ENCODE measurements at regions of chr18 and their contacts with region 1.

Region 1: DNA sequence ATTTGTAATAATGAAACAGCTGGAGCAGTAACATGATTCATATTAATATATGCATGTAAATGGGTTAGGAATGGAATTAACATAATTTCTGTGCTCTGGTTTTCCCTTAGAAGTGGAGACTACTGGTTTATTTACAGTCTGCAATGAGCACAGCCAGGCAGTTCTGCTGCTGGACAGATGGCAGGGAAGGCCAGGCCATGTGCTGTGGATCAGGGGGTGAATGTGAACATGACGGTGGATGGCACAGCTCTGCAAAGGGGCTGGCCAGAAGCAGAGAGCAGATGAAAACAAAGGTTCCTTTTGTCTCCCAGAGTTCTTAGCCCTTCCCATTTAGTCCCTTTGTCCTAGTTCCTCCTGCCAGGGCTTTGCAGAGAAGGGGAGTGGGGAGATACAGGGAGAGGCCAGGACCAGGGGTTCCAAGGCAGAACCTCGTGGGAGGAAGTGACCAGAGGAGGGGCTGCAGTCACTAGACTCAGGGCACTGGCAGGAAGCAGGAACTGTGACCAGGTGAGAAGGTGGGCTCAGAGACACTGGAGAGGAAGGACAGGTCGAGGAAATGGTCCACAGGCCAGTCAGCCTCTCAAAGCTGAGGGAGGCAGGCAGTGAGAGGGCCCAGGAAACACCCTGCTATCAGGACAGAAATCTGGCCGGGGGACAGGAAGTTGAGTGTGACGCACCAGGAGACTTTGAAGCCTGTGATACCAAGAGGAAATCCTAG is 112.9 kb upstream of the ATP8B1 start:
- DNase-seq: no peak

Region 2: DNA sequence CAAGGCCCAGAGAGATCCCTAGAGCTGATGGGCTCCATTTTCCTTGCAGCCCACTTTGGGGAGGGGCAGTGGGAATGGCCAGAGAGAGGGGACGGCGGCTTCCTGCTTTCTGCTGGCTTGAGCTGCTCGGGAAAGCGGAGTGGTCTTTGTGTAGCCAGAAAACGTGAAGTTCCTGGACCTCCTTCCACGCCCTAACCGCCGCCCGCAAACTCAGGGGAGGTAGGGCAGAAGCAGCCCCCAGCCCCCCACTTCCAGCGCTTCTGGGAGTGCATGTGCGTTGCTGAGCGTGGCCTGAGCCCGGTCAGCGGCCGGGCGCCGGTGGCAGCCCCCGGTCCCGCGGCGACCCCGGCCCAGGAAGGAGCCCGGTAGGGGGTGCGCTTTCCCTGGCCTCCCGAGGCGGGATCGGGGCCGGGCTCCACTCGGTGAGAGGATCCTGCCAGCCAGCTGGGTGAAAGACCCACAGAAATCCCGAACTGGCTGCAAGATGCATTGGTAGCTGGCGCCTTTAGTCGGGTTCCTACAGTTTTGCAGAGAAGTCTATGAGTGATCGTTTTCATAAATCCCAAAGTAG is 794.4 kb before region 1 on chr18:
- intact Hi-C with region 1: loop called in 1 of 2 experiments (anchors 5 kb)
- DNase-seq: no peak

Region 3: DNA sequence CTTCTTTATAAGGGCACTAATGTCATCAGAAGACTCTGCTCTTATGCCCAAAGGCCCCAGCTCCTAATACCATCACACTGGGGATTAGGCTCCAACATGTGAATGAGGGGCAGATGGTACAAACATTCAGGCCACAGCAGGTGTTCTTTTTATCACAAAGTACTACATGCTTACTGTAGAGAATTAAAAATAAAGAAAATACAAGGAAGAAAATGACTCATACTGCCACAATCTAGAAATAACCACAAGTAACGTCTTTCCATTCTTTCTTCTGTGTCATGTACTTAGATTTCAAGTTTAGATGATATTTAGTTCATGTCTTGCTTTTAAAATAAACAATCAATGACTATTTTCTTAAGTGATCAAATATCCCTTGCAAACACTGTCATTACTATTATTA is 27.7 kb after region 1 on chr18:
- intact Hi-C with region 1: no loop called
- DNase-seq: no peak

Measured in posterior vena cava (tissue), 2 donors.